Left colon (tissue), 2 donors: ENCODE measurements at regions of chr11 and their contacts with region 1.

Region 1: GRCh38 chr11:117843666-117844484 is 19.3 kb upstream of the FXYD2 start:
- DNase-seq: peak; percentile 57 to 88
- ATAC-seq: peak; percentile 73

Region 2: DNA sequence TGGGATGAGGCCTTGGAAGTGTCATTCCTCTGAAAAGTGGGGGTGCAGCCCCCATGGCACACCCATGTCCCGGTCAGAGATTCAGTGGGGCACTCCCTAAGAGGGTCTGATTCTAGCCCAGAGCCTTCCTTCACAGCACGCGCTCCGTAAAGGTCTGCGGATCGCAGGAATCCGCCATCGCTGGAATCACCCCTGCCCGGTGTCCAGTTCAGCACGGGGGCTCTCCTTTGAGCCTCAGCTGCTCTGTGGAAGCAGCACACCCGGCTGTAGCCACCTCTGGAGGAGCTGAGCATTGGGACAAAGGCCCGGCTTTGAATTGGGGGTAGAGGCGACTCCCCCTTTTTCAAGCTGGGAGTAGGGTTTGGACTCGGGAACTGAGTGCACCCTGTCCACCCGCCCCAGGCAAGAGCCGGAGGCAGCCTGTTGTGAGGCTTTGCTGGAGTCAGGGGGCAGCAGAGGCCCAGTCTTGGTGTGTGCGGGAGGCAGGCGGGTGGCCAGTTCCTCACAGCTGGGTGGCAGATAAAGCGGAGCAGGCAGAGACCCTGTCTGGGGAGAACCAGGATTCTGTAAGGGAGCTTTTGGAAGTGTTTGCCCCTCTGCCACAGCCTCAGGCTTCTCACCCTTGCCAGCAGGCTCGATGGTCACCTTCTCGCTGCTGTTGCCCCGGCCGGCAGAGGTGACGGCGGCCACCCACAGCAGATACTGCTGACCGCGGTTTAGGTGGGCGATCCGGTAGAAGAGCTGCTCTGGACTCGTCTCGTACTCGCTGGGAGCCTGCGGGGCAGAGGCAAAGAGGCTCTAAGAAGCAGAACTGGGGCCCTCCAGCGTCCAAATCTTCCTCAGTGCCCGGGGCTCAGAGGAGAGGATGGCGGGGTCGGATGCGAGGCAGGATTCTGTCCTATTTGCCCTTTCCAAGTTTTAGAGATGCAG is 400.3 kb before region 1 on chr11:
- intact Hi-C with region 1: no loop called
- DNase-seq: peak in 1 of 2 donors; percentile 58
- ATAC-seq: peak; percentile 89

Region 3: DNA sequence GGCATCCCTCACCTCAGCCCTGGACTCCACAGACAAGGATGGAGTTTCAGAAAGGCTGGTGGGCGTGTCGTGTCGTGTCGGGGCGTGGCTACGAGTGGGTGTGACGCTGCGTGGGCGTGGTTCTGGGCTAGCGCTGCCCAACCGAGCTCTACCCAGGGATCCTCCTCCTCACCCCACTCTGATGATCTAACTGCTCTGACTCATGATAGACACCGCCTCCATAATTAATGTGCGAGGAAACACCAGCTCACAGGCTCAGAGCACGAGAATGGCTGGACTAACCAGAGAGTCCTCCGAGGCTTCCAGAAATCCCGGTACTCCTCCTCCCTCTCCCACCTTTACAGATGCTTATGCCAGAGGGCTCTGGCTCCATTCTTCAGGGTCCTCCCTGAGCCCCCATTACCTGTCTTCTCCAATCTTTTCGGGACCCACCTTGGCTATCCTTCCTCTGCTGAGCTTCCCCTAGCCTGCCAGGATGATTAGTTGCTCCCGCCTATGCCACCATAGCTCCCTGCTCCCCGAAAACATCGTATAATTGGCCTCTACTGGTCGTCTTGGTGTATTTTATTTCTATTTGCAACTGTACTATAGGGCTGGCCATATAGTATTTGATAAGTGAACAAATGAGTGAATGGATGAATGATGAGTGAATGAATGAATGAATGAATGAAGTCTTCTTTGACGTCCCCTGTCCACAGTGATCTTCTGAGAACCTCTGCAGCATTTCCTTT is 63.5 kb after region 1 on chr11:
- intact Hi-C with region 1: loop called in 1 of 2 experiments (anchors 10 kb)
- DNase-seq: peak; percentile 91
- ATAC-seq: peak; percentile 100

Region 4: DNA sequence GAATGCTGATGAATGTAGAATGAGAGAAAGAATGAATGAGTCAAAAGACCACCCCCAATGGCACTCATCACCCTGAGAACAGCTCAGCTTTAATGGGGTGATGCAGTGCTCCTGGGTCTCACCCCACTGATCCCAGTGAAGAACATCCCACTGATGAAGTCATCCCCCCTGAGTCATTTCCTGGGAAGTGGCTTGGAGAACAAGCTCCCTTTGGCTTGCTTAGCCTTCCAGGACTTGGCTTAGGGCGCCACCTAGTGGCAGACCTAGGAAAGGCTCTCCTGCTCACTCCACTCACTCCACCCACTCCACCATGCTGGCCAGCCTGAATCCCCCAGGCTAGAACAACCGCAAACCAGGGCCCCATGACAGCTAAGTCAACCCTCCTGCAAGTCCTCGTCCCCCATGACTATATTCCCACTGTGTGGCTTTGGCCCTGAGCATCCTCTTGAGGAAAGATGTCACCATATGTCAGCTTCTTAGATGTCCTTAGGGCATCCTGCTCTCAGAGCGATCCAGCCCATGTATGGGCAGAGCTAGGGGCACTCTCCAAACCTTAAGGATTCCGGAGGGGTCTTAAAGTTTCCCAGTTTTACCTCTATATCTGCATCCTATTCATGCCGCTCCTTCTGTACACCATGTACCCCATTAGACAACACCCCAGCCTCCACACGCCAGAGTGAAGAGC is 103.1 kb after region 1 on chr11:
- intact Hi-C with region 1: loop called (anchors 2 to 10 kb)
- DNase-seq: peak; percentile 75 to 89
- ATAC-seq: peak; percentile 96

Region 5: GRCh38 chr11:118015385-118015841 is 171.5 kb after region 1 on chr11:
- intact Hi-C with region 1: no loop called
- DNase-seq: no peak
- ATAC-seq: no peak

Region 6: GRCh38 chr11:118033443-118033842 is 189.6 kb after region 1 on chr11:
- intact Hi-C with region 1: no loop called
- DNase-seq: no peak
- ATAC-seq: no peak